Ovary (tissue), 10 donors: ENCODE measurements at regions of chr3 and their contacts with region 1.

Region 1: DNA sequence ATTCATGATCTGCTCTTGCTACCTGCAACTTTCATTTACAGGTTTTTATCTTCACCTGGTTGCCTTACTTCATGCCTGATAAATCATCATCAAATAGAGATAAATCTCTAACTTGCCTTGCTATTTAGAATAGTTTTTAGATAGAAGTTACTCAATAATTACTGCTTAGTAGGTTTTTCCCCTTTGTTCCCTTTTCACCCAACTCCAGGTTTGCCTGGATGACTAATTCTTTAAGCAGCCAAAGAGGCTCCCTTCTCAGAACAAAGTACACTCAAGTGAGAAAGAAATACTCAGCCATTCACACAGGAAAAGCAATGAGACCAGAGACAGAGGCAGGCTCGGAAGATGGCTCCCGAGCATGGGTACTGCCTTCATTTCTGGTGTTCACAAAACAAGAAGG is 268.1 kb upstream of the CRBN start:
- DNase-seq: no peak
- H3K4me3 ChIP-seq: no peak overlapping the region
- H3K27ac ChIP-seq: no peak overlapping the region
- H3K4me1 ChIP-seq: no peaks in the 10 kb centered on the region
- H3K27me3 ChIP-seq: no peaks in the 10 kb centered on the region
- CTCF ChIP-seq: no peak
- EP300 ChIP-seq: no peak
- POLR2A ChIP-seq: no peak

Region 2: GRCh38 chr3:2484162-2485026 is 963.2 kb before region 1 on chr3:
- intact Hi-C with region 1: no loop called
- DNase-seq: no peak
- H3K4me3 ChIP-seq: no peak overlapping the region
- H3K27ac ChIP-seq: no peak overlapping the region
- H3K4me1 ChIP-seq: no peaks in the 10 kb centered on the region
- H3K27me3 ChIP-seq: no peaks in the 10 kb centered on the region
- CTCF ChIP-seq: no peak
- EP300 ChIP-seq: no peak
- POLR2A ChIP-seq: no peak

Region 3: DNA sequence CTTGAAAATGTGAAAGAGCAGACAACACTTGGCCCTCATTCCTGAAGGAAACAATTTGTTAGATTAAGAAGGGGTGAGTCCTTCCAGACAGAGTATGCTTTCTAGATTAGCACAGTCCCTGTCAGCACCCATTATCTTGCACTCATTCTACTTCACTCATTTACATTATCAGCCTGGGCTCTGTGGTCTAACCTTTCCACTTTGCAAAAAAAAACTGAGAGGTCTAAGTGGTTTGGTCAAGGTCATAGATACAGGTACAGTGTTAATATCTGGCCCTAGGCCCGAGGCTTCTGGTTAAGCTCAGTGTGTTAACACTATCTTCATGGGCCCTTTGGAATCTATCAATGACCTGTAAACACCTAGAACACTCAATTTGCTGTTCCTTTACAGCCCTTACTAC is 228.2 kb after region 1 on chr3:
- intact Hi-C with region 1: loop called in 1 of 4 experiments (anchors 10 kb)
- DNase-seq: no peak
- H3K4me3 ChIP-seq: no peak overlapping the region
- H3K27ac ChIP-seq: no peak overlapping the region
- H3K4me1 ChIP-seq: no peaks in the 10 kb centered on the region
- H3K27me3 ChIP-seq: no peaks in the 10 kb centered on the region
- CTCF ChIP-seq: no peak
- EP300 ChIP-seq: no peak
- POLR2A ChIP-seq: no peak